Posterior cingulate gyrus (tissue), 11 donors: ENCODE measurements at regions of chr11 and their contacts with region 1.

Region 1: DNA sequence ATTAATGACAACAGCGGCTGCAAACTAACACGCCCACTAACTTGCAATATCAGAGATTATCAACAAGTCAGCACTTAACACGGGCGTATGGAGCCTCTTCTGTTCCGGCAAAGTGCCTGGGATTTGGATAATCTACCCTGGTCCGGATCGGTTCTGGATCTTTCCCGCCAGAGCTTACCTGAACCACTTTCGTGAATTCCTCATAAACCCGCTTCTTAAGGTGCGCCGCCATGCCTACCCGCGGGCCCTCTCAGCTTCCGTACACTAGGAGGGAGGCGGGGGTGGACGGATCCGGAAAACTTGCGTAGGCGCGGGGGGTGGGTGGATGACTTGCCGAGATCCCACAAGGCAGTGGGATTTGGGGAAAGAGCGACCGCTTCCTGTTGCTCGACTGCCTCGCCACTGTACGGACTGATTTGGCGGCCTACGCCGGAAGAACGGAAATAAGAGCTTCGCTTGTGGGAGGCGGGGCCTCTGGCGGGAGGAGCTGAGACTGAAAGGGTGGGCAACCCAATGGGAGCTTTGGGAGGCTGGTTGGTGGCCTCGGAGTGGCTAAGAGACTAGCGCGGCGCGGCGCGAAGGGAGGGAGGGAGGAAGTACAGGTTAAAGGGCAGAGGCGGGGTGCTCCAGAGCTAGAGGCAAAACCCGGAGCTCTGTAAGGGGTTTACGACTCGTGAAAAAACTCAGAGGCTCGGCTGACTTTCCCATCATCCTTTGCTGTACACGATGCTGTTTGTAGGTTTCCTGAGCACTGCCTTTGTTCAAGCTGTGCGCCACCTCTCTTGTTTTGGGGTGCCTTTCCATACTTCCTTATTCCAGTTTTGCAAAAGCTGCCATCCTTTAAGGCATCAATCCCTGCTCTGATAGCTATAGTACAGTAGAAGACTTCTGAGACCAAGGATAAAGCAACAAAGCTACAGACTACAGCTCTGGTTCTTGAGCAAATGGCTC is at the start of gene INTS4:
- DNase-seq: peak; percentile 98 to 100 (median 99)

Region 2: DNA sequence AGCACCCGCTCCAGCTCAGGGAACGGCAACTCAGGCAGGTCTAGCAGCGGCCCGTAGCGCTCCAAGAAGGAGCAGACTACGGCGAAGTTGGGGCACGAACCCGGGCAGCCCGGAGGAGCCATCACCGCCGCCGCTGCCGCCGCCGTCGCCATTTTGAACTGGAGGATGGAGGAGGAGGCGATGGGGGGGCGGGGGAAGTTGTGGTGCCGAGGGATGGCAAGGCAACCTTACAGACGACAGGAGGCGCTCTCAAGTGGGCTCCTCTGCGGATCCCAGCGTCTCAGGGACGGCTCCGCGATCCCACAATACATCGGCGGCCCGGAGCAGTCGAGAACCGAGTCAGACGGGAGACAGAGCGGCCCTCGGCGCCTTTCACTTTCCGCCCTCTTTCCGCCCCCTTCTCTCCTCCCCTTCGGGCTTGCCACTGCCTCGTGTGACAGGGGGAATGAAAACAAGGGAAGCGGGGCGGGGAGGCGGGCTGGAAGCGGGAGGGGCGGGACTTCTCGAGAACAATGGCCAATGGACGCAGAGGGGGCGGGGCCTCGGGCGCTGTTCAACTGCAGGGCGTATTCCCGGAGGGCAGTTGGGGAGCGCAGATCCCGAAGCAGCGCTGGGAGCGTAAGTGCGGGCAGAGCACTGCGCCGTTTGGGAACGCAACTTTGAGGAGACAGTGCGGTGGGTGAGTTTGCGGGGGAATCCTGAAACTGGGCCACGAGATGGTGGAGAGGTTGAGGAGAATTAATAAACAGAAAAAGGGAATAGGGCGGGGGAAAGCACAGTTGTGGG is 173.9 kb before region 1 on chr11 and contains the starts of genes AAMDC and RSF1:
- intact Hi-C with region 1: loop called (anchors 1 kb)
- DNase-seq: peak; percentile 97 to 100 (median 99)

Region 3: DNA sequence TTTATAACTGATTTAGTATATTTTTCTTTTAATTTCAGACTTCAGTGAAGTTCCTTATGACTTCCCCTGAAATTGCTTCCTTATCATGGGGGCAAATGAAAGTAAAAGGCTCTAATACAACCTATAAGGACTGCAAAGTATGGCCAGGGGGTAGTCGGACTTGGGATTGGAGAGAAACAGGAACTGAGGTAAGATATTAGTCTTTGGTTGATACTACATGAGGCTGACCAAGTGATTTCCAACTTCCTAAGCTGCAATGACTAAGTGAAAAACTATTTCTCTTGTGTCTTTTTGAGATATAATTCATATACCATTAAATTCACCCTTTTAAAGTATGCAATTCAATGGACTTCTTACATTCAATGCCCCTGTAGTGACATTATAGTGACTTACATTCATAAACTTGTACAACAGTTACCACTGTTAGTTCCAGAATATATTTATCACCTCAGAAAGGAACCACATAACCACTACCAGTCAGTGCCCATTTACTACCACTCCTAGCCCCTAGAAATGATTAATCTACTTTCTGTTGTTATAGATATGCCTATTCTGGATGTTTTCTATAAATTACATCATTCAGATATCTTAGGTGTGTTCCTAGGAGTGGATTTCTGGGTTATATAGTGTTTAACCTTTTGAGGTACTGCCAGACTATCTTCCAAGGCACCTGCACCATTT is 152.1 kb before region 1 on chr11:
- intact Hi-C with region 1: no loop called
- DNase-seq: no peak

Region 4: DNA sequence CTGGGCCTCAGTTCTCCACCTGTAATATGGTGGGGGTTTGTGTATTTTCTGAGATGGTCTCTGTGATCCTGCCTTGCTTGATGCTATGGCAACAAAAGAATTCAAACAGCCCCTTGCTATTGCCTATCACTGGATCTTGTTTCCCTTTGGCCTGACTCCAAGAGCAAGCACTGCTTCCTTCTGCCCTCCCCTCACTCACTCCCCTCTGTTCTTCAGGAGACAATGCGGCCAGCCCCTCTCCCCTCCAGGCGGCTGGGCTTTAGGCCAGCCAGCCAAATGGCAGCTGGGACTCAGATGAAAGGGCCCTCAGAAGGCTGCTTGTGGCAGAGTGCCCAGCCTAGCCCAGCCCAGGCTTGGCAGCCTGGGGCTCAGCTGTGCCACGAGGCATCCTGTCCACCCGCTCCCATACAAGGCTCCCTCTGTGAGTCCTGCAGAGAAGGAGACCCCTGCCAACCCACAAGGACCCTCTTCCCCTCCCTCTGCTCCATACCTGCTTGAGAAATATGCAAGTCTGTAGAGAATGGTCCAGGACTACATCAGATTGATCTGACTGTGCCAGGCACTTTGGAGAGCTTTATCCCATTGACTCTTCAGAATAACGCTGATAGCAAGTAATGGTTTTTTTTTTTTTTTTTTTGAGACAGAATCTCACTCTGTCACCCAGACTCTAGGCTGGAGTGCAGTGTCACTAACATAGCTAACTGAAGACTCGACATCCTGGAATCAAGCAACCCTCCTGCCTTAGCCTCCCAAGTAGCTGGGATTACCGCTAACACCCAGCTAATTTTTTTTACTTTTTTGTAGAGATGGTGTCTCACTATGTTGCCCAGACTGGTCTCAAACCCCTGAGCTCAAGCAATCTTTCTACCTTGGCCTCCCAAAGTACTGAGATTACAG is 36.0 kb after region 1 on chr11:
- intact Hi-C with region 1: loop called (anchors 2 kb)
- DNase-seq: peak; percentile 83 to 98 (median 89)

Region 5: GRCh38 chr11:78045851-78046485 is 51.3 kb after region 1 on chr11:
- intact Hi-C with region 1: loop called (anchors 2 kb)
- DNase-seq: peak; percentile 67 to 98 (median 82)

Region 6: DNA sequence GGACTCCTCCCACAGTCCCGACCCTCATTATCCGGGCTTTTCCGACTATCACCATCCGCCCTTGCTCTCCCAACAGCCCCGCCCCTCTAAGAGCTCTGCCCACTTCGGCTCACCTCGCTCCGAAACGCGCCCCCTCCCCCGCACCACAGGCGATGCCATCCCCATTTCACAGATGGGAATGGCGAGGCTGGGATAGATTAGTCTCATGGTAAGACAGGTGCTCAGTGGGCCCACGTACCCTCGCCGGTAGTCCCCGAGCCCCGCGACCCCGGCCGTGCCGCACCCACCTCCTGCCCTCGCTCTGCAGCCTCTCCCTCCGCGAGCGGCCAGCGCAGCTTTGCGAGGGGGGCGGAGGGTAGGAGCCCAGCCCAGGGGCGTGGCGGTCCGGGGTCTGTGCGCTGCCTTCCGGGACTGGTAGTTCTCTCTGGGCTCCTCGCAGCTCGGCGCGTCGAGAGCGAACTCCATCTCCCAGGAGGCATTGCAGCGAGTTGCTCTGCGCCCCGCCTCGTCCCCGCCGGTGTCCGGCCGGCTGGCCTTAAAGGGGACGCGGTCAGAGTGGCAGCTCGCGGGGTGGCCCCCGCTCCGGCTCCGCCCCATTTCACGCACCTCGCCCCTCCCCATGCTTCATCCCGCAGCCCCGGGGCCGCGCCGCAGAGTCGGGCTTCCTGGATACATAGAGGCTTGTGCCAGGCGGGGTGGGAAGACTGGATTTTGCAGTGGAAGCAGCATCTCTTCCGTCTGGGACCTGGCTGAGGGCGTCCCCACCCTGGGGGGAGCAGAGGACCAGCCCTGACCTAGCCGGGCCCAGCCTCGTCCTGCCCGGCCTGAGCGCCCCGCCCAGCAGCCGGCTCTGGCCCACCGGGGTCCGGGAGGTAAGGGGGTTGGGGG is 193.8 kb after region 1 on chr11 and contains the starts of genes KCTD21 and USP35:
- intact Hi-C with region 1: loop called (anchors 5 kb)
- DNase-seq: peak; percentile 94 to 100 (median 97)